ENCODE measurements at regions of chr18 and their contacts with region 1.

Region 1: GRCh38 chr18:63518178-63519012 is 23.8 kb upstream of the SERPINB12 start:
- DNase-seq: peak; percentile 74
- H3K4me3 ChIP-seq: no peak overlapping the region
- H3K27ac ChIP-seq: no peak overlapping the region
- H3K4me1 ChIP-seq: no peaks in the 10 kb centered on the region
- CTCF ChIP-seq: peak; percentile 76

Region 2: GRCh38 chr18:63578357-63578958 is 60.1 kb after region 1 on chr18:
- CTCF ChIA-PET with region 1: interaction called, 4 read pairs
- POLR2A ChIA-PET with region 1: interaction called, 5 read pairs
- intact Hi-C with region 1: loop called (anchors 1 kb)
- DNase-seq: peak; percentile 28
- H3K4me3 ChIP-seq: no peak overlapping the region
- H3K27ac ChIP-seq: no peak overlapping the region
- H3K4me1 ChIP-seq: no peaks in the 10 kb centered on the region
- CTCF ChIP-seq: peak; percentile 81

Region 3: GRCh38 chr18:63775166-63775730 is 256.9 kb after region 1 on chr18 and contains the start of gene SERPINB7:
- CTCF ChIA-PET with region 1: no interaction called
- POLR2A ChIA-PET with region 1: no interaction called
- intact Hi-C with region 1: no loop called
- DNase-seq: no peak
- H3K4me3 ChIP-seq: no peak within 1 kb of the TSS
- H3K27ac ChIP-seq: no peak within 1 kb of the TSS
- H3K4me1 ChIP-seq: no peaks in the 10 kb centered on the region
- CTCF ChIP-seq: no peak
- total RNA-seq, gene SERPINB7: not detected in 2 replicates

Region 4: GRCh38 chr18:63848159-63848558 is 329.8 kb after region 1 on chr18:
- CTCF ChIA-PET with region 1: no interaction called
- POLR2A ChIA-PET with region 1: no interaction called
- intact Hi-C with region 1: loop called (anchors 5 kb)
- DNase-seq: peak; percentile 12
- H3K4me3 ChIP-seq: no peak overlapping the region
- H3K27ac ChIP-seq: no peak overlapping the region
- H3K4me1 ChIP-seq: no peaks in the 10 kb centered on the region
- CTCF ChIP-seq: peak; percentile 61

Measured in OCI-LY7 (cell line).